CD14-positive monocyte (primary cell): ENCODE measurements at regions of chr11 and their contacts with region 1.

Region 1: GRCh38 chr11:57530596-57531507 is at the start of gene TIMM10:
- DNase-seq: peak; percentile 86 to 92 (median 87)
- H3K4me3 ChIP-seq: peak within 1 kb of the TSS; percentile 79 to 98 (median 80)
- H3K4me3 Mint-ChIP-seq: peak within 1 kb of the TSS; percentile 95 to 98
- H3K27ac ChIP-seq: peak within 1 kb of the TSS; percentile 32 to 91
- H3K27ac Mint-ChIP-seq: peak within 1 kb of the TSS; percentile 79 to 93 (median 89)
- H3K4me1 ChIP-seq: peaks cover 23 to 27% of the 10 kb centered on the region in 2 donors
- H3K4me1 Mint-ChIP-seq: peaks cover 18% of the 10 kb centered on the region
- H3K27me3 ChIP-seq: no peaks in the 10 kb centered on the region
- H3K27me3 Mint-ChIP-seq: peaks cover 0 to 3% (median 0%) of the 10 kb centered on the region in 3 donors
- CTCF ChIP-seq: no peak
- polyA plus RNA-seq, gene TIMM10: 30.4 to 62.1 (median 58.3) TPM

Region 2: DNA sequence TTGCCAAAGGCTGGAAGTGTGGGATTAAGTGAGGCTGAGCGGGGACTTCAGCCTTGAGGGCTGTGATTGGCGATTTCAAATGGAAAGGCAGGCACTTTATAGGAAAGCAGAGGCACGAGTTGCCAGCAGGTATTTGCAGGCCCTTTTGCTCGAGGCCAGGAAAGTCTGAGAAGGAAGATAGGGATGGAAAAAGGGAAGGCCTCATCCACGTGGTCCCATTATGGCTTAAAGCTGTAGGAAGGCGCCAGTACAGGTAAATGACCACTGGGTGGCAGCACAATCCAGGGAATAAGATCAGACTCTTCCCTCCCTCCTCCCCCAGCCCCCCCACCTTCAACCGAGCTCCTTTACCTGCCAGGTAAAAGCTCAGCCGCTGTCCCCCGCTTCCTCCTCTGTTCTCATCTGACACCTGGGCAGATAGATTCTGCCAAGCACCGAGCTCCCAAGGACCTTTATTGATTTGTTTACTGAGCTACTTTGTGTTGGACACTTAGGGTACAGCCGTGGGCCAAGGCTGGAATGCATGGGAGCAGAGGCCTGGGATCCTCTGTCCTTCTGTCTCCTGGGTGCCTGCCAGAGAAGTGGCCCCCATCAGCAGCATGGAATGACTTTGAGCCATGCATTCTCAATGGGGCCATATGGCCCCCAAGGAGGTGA is 185.2 kb before region 1 on chr11:
- intact Hi-C with region 1: loop called (anchors 5 kb)
- DNase-seq: peak; percentile 49 to 77 (median 73)
- H3K4me3 ChIP-seq: no peak overlapping the region
- H3K4me3 Mint-ChIP-seq: no peak overlapping the region
- H3K27ac ChIP-seq: no peak overlapping the region
- H3K27ac Mint-ChIP-seq: peak overlapping the region in 1 of 7 donors; percentile 55
- H3K4me1 ChIP-seq: no peaks in the 10 kb centered on the region
- H3K4me1 Mint-ChIP-seq: peaks cover 8% of the 10 kb centered on the region
- H3K27me3 ChIP-seq: no peaks in the 10 kb centered on the region
- H3K27me3 Mint-ChIP-seq: peaks cover 0 to 9% (median 4%) of the 10 kb centered on the region in 3 donors
- CTCF ChIP-seq: peak; percentile 88

Region 3: DNA sequence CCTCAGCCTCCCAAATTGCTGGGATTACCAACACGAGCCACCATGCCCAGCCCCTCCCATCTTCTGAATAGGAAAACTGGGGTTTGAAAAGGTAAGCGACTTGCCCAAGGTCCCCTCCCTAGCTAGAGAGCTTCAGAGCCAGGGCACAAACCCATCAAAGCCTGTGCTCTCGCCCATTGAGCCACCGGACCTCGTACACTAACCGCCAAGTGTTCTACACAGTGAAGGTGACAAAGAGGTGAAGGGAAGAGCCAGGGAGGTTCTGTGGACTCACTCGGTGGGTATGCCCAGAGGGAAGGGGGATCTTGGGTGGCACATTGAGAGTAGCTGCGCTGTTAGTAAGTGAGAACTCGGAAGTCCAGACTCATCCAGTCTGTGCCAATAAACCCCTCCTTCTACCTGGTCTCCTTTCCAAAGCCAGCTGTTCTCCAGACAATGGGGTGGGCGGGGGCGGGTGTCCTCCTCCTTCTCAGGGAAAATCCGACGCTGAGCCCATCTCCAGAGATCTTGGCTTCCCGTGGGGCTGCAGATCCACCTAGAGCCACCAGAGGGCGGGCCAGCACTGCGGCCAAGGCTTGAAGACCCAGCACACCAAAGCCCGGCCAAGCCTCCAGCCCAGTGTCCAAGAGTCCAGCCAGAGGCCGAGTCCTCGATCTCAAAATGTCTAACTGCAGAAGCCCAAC is 73.8 kb before region 1 on chr11:
- intact Hi-C with region 1: loop called (anchors 2 to 5 kb)
- DNase-seq: peak; percentile 70 to 83 (median 83)
- H3K4me3 ChIP-seq: peak overlapping the region in 1 of 3 experiments; percentile 81
- H3K4me3 Mint-ChIP-seq: peak overlapping the region; percentile 51 to 83
- H3K27ac ChIP-seq: no peak overlapping the region
- H3K27ac Mint-ChIP-seq: peak overlapping the region in 3 of 7 donors; percentile 30 to 82 (median 58)
- H3K4me1 ChIP-seq: peaks cover 37 to 40% of the 10 kb centered on the region in 2 donors
- H3K4me1 Mint-ChIP-seq: peaks cover 35% of the 10 kb centered on the region
- H3K27me3 ChIP-seq: peaks cover 25 to 49% of the 10 kb centered on the region in 2 donors
- H3K27me3 Mint-ChIP-seq: peaks cover 39 to 48% (median 43%) of the 10 kb centered on the region in 3 donors
- CTCF ChIP-seq: peak; percentile 97

Region 4: GRCh38 chr11:57493507-57494503 is 37.0 kb before region 1 on chr11:
- intact Hi-C with region 1: loop called in 1 of 2 experiments (anchors 5 kb)
- DNase-seq: peak in 2 of 3 donors; percentile 40 to 43
- H3K4me3 ChIP-seq: no peak overlapping the region
- H3K4me3 Mint-ChIP-seq: no peak overlapping the region
- H3K27ac ChIP-seq: no peak overlapping the region
- H3K27ac Mint-ChIP-seq: no peak overlapping the region
- H3K4me1 ChIP-seq: no peaks in the 10 kb centered on the region
- H3K4me1 Mint-ChIP-seq: no peaks in the 10 kb centered on the region
- H3K27me3 ChIP-seq: no peaks in the 10 kb centered on the region
- H3K27me3 Mint-ChIP-seq: peaks cover 0 to 1% (median 0%) of the 10 kb centered on the region in 3 donors
- CTCF ChIP-seq: peak; percentile 98

Region 5: GRCh38 chr11:57700425-57700824 is 169.6 kb after region 1 on chr11:
- intact Hi-C with region 1: loop called in 1 of 2 experiments (anchors 10 kb)
- DNase-seq: no peak
- H3K4me3 ChIP-seq: no peak overlapping the region
- H3K4me3 Mint-ChIP-seq: no peak overlapping the region
- H3K27ac ChIP-seq: no peak overlapping the region
- H3K27ac Mint-ChIP-seq: no peak overlapping the region
- H3K4me1 ChIP-seq: no peaks in the 10 kb centered on the region
- H3K4me1 Mint-ChIP-seq: no peaks in the 10 kb centered on the region
- H3K27me3 ChIP-seq: no peaks in the 10 kb centered on the region
- H3K27me3 Mint-ChIP-seq: peaks cover 0 to 2% (median 0%) of the 10 kb centered on the region in 3 donors
- CTCF ChIP-seq: no peak